ENCODE measurements at regions of chr13 and their contacts with region 1.

Region 1: DNA sequence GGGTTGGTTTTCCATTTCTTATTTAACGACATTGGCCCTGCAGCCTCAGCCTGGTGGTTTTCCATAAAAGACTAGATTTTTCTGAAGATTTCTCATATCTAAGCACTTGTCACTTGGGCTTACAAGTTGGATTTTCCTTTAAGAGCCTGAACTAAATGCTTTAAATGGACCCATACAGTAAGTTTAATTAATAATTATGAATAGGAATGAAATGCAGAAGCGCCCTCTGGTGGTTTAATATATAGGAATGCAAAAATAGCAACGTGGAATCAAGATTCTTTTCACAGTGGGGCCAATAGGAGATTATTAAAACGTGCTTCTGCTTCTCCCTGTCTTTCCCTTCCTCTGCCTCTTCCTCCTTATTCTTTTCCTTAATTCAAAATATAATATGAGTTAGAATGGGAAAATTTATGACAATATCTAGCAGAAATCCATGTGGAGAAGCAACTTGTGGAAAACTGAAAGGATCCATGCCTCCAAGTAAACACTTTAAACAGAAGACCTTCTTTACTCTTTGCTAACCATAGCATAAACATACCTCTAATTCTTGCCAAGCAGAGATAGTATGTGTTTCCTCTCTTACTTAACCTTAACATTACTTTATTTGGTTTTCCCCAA is 324.0 kb downstream of the GPC5 start:
- DNase-seq: no peak
- ATAC-seq: peak; percentile 60

Region 2: GRCh38 chr13:91375116-91375729 is 347.2 kb before region 1 on chr13:
- intact Hi-C with region 1: loop called (anchors 10 kb)
- DNase-seq: no peak
- ATAC-seq: peak; percentile 43